ENCODE measurements at regions of chr2 and their contacts with region 1.

Region 1: GRCh38 chr2:231601349-231602229 is 8.9 kb downstream of the TEX44 start:
- DNase-seq: peak; percentile 81 to 87 (median 83)
- H3K4me3 ChIP-seq: no peak overlapping the region
- H3K27ac ChIP-seq: no peak overlapping the region
- H3K4me1 ChIP-seq: peaks cover 0 to 19% (median 17%) of the 10 kb centered on the region in 4 experiments
- H3K27me3 ChIP-seq: peaks cover 0 to 2% (median 0%) of the 10 kb centered on the region in 5 experiments

Region 2: DNA sequence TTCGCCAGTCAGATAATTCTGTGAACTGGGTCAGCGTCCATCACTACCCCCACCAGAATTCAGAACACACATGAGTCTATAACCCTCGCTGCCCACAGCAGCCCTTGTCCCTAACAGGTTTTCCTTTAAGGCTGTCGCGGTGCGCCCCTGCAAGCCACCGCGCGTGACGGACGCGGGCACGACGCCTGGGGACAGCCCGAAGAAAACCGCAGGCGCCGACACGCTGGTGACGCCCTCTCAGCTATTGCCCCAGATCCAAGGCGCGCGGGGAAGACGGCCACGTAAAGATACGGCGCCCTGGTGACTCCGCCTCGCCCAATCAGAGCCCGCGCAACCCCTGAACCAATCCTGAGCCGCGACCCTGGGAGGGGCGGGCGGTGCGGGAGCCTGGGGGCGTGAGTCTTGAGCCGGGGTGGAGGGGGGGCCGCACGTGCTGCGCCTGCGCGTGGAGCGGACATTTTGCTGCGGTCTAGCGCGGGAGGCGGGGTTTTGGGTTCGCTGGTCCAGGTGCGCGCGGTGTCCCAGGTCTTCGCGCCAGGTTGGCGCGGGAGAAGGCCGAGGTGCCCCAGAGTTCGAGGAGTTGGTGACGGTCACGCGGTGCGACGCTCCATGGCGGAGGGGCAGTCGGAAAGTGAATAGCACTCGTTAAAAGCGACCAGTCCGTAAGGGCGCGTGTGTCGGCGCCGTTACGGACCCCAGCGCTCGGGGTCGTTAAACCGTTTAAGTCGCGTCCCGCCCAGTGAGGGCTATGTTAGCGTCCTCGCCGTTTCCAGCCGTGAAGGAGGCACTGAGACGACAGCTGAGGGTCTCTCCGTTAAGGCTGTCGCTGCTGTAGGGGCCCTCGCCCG is 87.3 kb before region 1 on chr2:
- CTCF ChIA-PET with region 1: interaction called, 18 read pairs
- POLR2A ChIA-PET with region 1: no interaction called
- DNase-seq: peak; percentile 98 to 99 (median 99)
- H3K4me3 ChIP-seq: peak overlapping the region; percentile 50 to 83 (median 76)
- H3K27ac ChIP-seq: peak overlapping the region; percentile 79 to 87
- H3K4me1 ChIP-seq: peaks cover 2 to 21% (median 10%) of the 10 kb centered on the region in 4 experiments
- H3K27me3 ChIP-seq: no peaks in the 10 kb centered on the region

Region 3: DNA sequence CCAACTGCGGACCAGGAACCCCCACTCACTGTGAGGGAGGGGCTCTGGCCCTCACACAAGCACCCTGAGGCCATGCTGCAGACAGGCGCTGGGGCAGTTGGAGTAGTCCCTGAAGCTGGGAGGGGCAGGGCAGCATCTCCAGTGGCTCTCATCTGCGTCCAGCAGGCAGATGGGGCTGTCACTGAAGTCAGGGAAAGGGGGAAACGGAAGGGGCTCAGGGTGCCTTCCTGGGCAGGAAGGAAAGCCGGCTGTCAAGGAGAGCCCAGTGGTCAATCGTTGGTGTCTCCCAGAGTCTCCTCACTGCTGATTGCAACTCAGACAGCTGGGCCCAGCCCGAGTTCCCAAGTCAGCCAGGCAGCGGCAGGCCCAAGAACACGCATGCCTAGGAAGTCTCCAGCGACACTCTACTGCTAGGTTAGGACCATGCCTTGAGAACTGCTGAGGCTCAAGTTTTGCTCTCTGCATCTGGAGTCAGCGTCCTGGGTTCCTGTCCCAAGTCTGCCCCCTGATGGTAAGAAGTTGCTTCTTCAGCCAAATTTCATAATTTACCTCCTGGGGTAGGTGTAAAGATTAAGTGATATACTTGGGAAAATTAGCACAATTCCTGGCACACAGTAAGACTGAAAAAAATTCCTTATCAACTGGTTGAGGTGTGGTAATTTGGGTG is 43.9 kb before region 1 on chr2:
- CTCF ChIA-PET with region 1: interaction called, 99 read pairs
- POLR2A ChIA-PET with region 1: no interaction called
- DNase-seq: peak; percentile 90 to 94 (median 92)
- H3K4me3 ChIP-seq: no peak overlapping the region
- H3K27ac ChIP-seq: no peak overlapping the region
- H3K4me1 ChIP-seq: peaks cover 7 to 37% (median 25%) of the 10 kb centered on the region in 4 experiments
- H3K27me3 ChIP-seq: no peaks in the 10 kb centered on the region

Region 4: GRCh38 chr2:231563378-231563961 is 38.1 kb before region 1 on chr2:
- CTCF ChIA-PET with region 1: interaction called, 99 read pairs
- POLR2A ChIA-PET with region 1: no interaction called
- DNase-seq: peak; percentile 73 to 83 (median 79)
- H3K4me3 ChIP-seq: no peak overlapping the region
- H3K27ac ChIP-seq: no peak overlapping the region
- H3K4me1 ChIP-seq: peaks cover 0 to 6% (median 4%) of the 10 kb centered on the region in 4 experiments
- H3K27me3 ChIP-seq: no peaks in the 10 kb centered on the region

Region 5: DNA sequence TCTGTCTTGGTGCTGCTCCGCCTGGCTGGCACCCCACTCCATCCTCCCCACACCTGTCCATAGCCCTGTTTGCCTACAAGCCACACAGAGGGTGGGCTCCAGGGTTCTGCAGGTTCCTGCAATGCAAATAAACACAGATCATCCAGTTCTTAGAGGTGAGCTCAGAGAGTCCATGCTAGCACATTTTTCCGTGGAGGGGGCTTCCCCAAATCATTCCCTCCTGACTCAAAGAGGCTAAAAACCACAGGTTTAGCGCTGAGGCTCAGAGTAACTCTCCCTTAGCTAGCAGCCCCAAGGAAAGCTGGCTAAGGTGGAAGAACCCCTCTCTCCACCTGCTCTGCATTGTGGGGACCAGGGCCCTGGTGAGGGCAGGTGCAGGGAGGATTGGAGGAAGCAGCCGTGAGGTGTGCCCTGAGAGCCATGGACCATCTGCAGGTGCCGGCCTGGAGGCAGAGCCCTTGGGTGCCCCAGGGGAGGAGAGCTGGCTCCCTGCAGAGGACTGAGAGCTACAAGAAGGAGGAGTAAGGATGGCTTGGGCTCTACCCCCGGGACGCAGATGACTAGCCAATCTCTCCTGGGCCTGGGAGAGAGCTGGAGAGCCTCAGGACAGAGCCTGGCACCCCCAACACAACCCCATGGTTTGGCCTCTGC is 32.7 kb before region 1 on chr2:
- CTCF ChIA-PET with region 1: interaction called, 99 read pairs
- POLR2A ChIA-PET with region 1: no interaction called
- DNase-seq: peak in 2 of 3 donors; percentile 41 to 46
- H3K4me3 ChIP-seq: no peak overlapping the region
- H3K27ac ChIP-seq: no peak overlapping the region
- H3K4me1 ChIP-seq: peaks cover 0 to 9% (median 7%) of the 10 kb centered on the region in 4 experiments
- H3K27me3 ChIP-seq: no peaks in the 10 kb centered on the region

Region 6: DNA sequence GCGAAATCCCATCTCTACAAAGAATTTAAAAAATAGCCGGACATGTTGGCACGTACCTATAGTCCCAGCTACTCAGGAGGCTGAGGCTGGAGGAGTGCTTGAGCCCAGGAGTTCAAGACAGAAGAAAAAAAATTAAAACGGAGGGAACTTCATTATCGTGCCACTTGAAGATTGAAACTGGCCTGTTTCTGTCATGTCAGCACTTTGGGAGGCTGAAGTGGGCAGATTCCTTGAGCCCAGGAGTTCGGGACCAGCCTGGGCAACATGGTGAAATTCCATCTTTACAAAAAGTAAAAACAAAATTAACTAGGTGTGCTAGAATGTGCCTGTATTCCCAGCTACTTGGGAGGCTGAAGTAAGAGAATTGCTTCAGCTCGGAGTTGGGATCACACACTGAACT is 11.9 kb before region 1 on chr2:
- CTCF ChIA-PET with region 1: interaction called, 17 read pairs
- POLR2A ChIA-PET with region 1: interaction called, 5 read pairs
- DNase-seq: no peak
- H3K4me3 ChIP-seq: no peak overlapping the region
- H3K27ac ChIP-seq: no peak overlapping the region
- H3K4me1 ChIP-seq: no peaks in the 10 kb centered on the region
- H3K27me3 ChIP-seq: no peaks in the 10 kb centered on the region

Region 7: GRCh38 chr2:231655897-231656296 is 54.3 kb after region 1 on chr2:
- CTCF ChIA-PET with region 1: no interaction called
- POLR2A ChIA-PET with region 1: no interaction called
- DNase-seq: no peak
- H3K4me3 ChIP-seq: no peak overlapping the region
- H3K27ac ChIP-seq: no peak overlapping the region
- H3K4me1 ChIP-seq: peaks cover 0 to 6% (median 4%) of the 10 kb centered on the region in 4 experiments
- H3K27me3 ChIP-seq: no peaks in the 10 kb centered on the region

Region 8: GRCh38 chr2:231752061-231752460 is 150.5 kb after region 1 on chr2:
- CTCF ChIA-PET with region 1: no interaction called
- POLR2A ChIA-PET with region 1: no interaction called
- DNase-seq: no peak
- H3K4me3 ChIP-seq: no peak overlapping the region
- H3K27ac ChIP-seq: no peak overlapping the region
- H3K4me1 ChIP-seq: no peaks in the 10 kb centered on the region
- H3K27me3 ChIP-seq: no peaks in the 10 kb centered on the region

Measured in common myeloid progenitor, CD34-positive (primary cell).